ENCODE measurements at regions of chr7 and their contacts with region 1.

Region 1: DNA sequence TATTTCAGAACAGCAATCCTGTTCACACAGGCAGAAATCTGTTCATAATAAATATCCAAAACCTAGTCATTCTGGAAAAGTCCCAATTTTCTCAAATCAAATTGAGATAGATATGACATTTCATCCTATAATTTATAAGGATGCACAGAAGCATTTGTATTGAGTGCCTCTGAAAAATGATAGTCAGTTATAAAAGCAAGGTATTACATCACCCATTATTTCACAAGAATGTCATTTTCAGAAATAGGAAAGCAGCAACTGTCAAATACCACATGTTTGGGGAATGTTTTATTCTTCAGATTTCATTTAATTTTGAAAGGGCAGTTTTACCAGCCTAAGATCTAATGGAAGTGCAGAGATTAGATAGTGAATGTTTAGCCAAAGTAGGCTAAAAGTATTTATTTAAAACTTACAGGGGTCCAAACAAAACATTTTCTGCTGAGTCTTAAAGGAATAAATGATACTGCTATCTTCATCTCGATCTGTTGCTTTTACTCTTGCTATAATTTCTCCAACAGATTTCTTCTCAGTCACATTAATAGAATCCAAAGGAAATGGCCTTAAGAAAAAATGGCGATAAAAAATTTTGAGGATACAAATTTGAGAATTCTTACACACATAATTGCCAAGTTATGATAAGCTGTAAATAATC is 185.8 kb downstream of the HGF start:
- DNase-seq: no peak
- ATAC-seq: no peak
- H3K4me3 ChIP-seq: no peak overlapping the region
- H3K27ac ChIP-seq: no peak overlapping the region
- H3K4me1 ChIP-seq: no peaks in the 10 kb centered on the region
- H3K27me3 ChIP-seq: no peaks in the 10 kb centered on the region
- CTCF ChIP-seq: no peak

Region 2: GRCh38 chr7:81534996-81535395 is 49.0 kb before region 1 on chr7:
- intact Hi-C with region 1: loop called in 1 of 10 experiments (anchors 10 kb)
- DNase-seq: no peak
- ATAC-seq: no peak
- H3K4me3 ChIP-seq: no peak overlapping the region
- H3K27ac ChIP-seq: no peak overlapping the region
- H3K4me1 ChIP-seq: no peaks in the 10 kb centered on the region
- H3K27me3 ChIP-seq: no peaks in the 10 kb centered on the region
- CTCF ChIP-seq: no peak

Region 3: GRCh38 chr7:82131215-82131614 is 547.2 kb after region 1 on chr7:
- intact Hi-C with region 1: no loop called
- DNase-seq: no peak
- ATAC-seq: no peak
- H3K4me3 ChIP-seq: no peak overlapping the region
- H3K27ac ChIP-seq: no peak overlapping the region
- H3K4me1 ChIP-seq: peaks cover 0 to 14% (median 0%) of the 10 kb centered on the region in 9 donors
- H3K27me3 ChIP-seq: no peaks in the 10 kb centered on the region
- CTCF ChIP-seq: no peak